Ovary (tissue), 10 donors: ENCODE measurements at regions of chr16 and their contacts with region 1.

Region 1: DNA sequence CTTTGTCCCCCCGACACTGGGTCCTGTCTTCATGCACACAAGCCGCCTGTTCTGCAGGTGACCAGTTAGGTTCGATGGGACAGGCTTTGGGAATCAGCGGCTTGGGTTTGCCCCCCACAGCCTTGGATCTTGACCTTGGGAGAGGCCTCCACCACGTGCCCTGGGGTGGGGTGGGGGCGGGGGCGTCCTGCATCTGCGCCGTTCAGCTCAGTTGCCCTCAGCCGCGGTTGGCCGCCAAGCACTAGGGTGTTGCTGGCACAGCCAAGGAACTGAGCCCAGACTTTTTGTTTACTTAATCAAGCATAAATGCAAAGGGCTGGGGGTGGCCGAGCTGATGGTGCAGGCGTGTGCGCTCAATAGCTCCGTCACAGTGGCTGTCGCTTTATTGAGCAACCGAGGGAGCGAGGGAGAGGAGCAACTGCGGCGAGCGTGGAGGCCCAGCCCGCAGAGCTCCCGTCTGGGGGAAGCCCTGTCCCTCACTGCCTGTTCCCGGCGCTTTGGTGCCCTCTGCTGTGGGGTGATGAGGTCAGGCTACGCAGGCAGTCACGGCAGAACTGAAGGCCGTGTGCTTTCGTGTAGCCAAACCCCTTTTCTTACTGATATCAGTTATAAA is 33.9 kb downstream of the JPH3 start:
- DNase-seq: peak; percentile 74 to 87 (median 79)
- H3K4me3 ChIP-seq: peak overlapping the region; percentile 11
- H3K27ac ChIP-seq: no peak overlapping the region
- H3K4me1 ChIP-seq: no peaks in the 10 kb centered on the region
- H3K27me3 ChIP-seq: no peaks in the 10 kb centered on the region
- CTCF ChIP-seq: peak; percentile 34 to 58 (median 42)
- EP300 ChIP-seq: no peak
- POLR2A ChIP-seq: no peak

Region 2: GRCh38 chr16:87387942-87388817 is 248.0 kb before region 1 on chr16:
- intact Hi-C with region 1: loop called in 1 of 4 experiments (anchors 5 kb)
- DNase-seq: peak; percentile 86 to 95 (median 91)
- H3K4me3 ChIP-seq: peak overlapping the region; percentile 24
- H3K27ac ChIP-seq: peak overlapping the region; percentile 49 to 89
- H3K4me1 ChIP-seq: peaks cover 5% of the 10 kb centered on the region
- H3K27me3 ChIP-seq: no peaks in the 10 kb centered on the region
- CTCF ChIP-seq: peak in 1 of 3 donors; percentile 16
- EP300 ChIP-seq: peak; percentile 94
- POLR2A ChIP-seq: peak; percentile 67

Region 3: DNA sequence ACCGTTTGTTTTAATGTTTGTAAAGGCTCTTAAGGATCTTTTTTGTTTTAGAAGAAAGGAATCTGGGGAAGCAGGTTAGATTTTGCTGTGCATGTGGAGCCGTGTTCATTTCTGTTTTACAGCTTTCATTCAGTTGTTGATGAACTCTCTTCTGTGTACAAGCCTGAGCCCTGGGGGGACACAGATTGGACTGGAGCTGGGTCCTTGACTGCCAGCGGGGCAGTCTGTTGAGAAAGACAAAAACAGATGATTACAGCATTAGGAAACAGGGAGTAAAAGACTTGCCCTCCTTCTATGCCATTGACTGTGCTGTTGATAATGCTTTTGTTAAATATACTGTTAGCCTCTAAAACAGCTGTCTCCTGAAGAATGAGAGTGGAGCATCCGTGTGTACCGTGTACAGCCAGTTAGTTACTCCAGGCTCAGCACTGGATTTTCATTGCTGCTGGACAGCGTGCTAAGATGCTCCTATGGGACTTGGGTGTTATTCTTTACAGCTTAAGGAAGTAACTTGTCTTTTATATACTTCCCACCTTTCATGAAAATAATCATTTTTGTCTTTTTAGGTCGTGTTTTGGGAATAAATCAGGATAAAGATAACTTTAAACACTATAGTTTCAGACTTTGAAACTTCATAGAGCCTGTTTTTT is 240.9 kb before region 1 on chr16:
- intact Hi-C with region 1: loop called in 2 of 4 experiments (anchors 5 kb)
- DNase-seq: peak in 1 of 5 donors; percentile 6
- H3K4me3 ChIP-seq: no peak overlapping the region
- H3K27ac ChIP-seq: no peak overlapping the region
- H3K4me1 ChIP-seq: peaks cover 3% of the 10 kb centered on the region
- H3K27me3 ChIP-seq: no peaks in the 10 kb centered on the region
- CTCF ChIP-seq: no peak
- EP300 ChIP-seq: no peak
- POLR2A ChIP-seq: no peak

Region 4: GRCh38 chr16:87416826-87417527 is 219.2 kb before region 1 on chr16:
- intact Hi-C with region 1: loop called in 3 of 4 experiments (anchors 10 kb)
- DNase-seq: peak in 3 of 5 donors; percentile 21 to 56 (median 53)
- H3K4me3 ChIP-seq: no peak overlapping the region
- H3K27ac ChIP-seq: no peak overlapping the region
- H3K4me1 ChIP-seq: no peaks in the 10 kb centered on the region
- H3K27me3 ChIP-seq: no peaks in the 10 kb centered on the region
- CTCF ChIP-seq: peak; percentile 11 to 59 (median 48)
- EP300 ChIP-seq: no peak
- POLR2A ChIP-seq: no peak

Region 5: DNA sequence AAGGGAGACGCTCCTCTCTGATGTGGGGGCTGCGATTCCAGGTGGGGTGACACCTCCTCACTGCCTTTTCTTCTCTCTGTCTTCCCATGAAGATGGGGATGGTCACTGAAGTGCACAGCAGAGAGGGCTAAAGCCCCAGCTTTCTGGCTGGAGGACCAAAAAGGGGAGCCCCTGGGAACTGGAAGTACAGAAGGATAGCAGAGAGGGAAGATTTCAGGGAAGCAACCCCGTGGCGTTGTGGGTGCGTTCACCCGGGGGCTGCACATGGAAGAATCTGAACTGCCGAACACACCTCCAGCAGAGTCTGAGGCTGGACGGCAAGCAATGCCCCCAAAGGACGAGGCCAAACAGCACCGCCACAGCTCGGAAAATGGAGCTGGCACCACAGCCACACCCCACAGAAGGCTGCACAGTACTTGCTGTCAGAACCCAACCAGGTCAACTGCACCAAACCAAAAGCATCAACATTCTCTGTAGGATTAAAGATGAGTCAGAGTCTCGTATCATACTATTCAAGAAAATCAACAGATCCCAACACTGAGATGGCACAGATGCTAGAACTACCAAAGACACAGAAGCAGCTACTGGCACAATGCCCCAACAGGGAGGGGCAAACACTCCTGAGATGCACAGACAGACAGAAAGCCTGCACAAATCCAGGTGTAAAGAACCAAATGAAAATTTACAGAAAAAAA is 194.1 kb before region 1 on chr16:
- intact Hi-C with region 1: no loop called
- DNase-seq: peak in 1 of 5 donors; percentile 12
- H3K4me3 ChIP-seq: no peak overlapping the region
- H3K27ac ChIP-seq: no peak overlapping the region
- H3K4me1 ChIP-seq: no peaks in the 10 kb centered on the region
- H3K27me3 ChIP-seq: no peaks in the 10 kb centered on the region
- CTCF ChIP-seq: no peak
- EP300 ChIP-seq: no peak
- POLR2A ChIP-seq: no peak

Region 6: GRCh38 chr16:87550496-87550961 is 85.6 kb before region 1 on chr16:
- intact Hi-C with region 1: loop called in 2 of 4 experiments (anchors 5 to 10 kb)
- DNase-seq: peak; percentile 40 to 70 (median 54)
- H3K4me3 ChIP-seq: no peak overlapping the region
- H3K27ac ChIP-seq: no peak overlapping the region
- H3K4me1 ChIP-seq: no peaks in the 10 kb centered on the region
- H3K27me3 ChIP-seq: no peaks in the 10 kb centered on the region
- CTCF ChIP-seq: peak; percentile 78 to 87 (median 80)
- EP300 ChIP-seq: no peak
- POLR2A ChIP-seq: no peak

Region 7: DNA sequence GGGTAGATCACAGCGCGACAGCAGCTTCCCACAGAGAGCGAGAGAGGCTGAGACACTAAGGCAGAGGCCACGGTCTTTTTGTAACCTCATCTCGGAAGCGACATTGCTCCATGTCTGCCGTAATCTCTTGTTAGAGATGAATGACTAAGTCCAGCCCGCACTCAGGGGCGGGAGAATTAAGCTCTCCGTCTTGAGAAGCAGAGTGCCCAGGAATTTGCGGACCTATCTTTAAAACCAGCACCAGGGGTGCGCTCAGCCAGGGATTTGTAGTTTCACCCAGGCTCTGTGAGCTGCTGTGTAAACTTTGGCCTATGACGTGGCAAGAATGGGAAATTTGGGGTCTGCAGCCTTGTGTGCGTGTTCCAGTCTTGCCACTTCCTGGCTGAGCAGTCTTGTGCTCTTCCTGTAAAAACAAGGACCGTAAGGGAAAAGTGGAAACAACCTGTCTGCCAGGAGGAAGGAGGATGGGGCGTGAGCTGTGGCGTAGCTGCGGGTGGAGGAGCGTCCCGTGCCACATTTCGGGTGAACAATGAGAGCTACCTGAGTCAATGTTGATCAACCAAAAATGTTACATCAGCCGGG is 49.9 kb before region 1 on chr16:
- intact Hi-C with region 1: loop called in 1 of 4 experiments (anchors 5 kb)
- DNase-seq: no peak
- H3K4me3 ChIP-seq: no peak overlapping the region
- H3K27ac ChIP-seq: no peak overlapping the region
- H3K4me1 ChIP-seq: peaks cover 20% of the 10 kb centered on the region
- H3K27me3 ChIP-seq: no peaks in the 10 kb centered on the region
- CTCF ChIP-seq: no peak
- EP300 ChIP-seq: no peak
- POLR2A ChIP-seq: no peak